ENCODE measurements at regions of chr5 and their contacts with region 1.

Region 1: GRCh38 chr5:56638061-56638621 is 177.2 kb upstream of the MAP3K1 start:
- DNase-seq: peak; percentile 64 to 70
- H3K4me3 ChIP-seq: no peak overlapping the region
- H3K27ac ChIP-seq: no peak overlapping the region
- H3K4me1 ChIP-seq: peaks cover 40% of the 10 kb centered on the region
- H3K27me3 ChIP-seq: no peaks in the 10 kb centered on the region
- CTCF ChIP-seq: no peak

Region 2: GRCh38 chr5:56440871-56441740 is 197.0 kb before region 1 on chr5:
- CTCF ChIA-PET with region 1: no interaction called
- POLR2A ChIA-PET with region 1: no interaction called
- intact Hi-C with region 1: loop called (anchors 10 kb)
- DNase-seq: peak; percentile 29 to 86
- H3K4me3 ChIP-seq: no peak overlapping the region
- H3K27ac ChIP-seq: peak overlapping the region; percentile 75
- H3K4me1 ChIP-seq: peaks cover 27% of the 10 kb centered on the region
- H3K27me3 ChIP-seq: no peaks in the 10 kb centered on the region
- CTCF ChIP-seq: no peak

Region 3: GRCh38 chr5:56543441-56544390 is 94.4 kb before region 1 on chr5:
- CTCF ChIA-PET with region 1: no interaction called
- POLR2A ChIA-PET with region 1: interaction called, 7 read pairs
- intact Hi-C with region 1: loop called (anchors 5 kb)
- DNase-seq: peak; percentile 62 to 97
- H3K4me3 ChIP-seq: no peak overlapping the region
- H3K27ac ChIP-seq: peak overlapping the region; percentile 96
- H3K4me1 ChIP-seq: peaks cover 39% of the 10 kb centered on the region
- H3K27me3 ChIP-seq: no peaks in the 10 kb centered on the region
- CTCF ChIP-seq: no peak

Region 4: GRCh38 chr5:56710826-56711590 is 72.9 kb after region 1 on chr5:
- CTCF ChIA-PET with region 1: no interaction called
- POLR2A ChIA-PET with region 1: no interaction called
- intact Hi-C with region 1: loop called (anchors 5 kb)
- DNase-seq: peak in 1 of 2 experiments; percentile 19
- H3K4me3 ChIP-seq: no peak overlapping the region
- H3K27ac ChIP-seq: no peak overlapping the region
- H3K4me1 ChIP-seq: no peaks in the 10 kb centered on the region
- H3K27me3 ChIP-seq: no peaks in the 10 kb centered on the region
- CTCF ChIP-seq: no peak

Region 5: GRCh38 chr5:56838409-56839039 is 200.4 kb after region 1 on chr5:
- CTCF ChIA-PET with region 1: no interaction called
- POLR2A ChIA-PET with region 1: interaction called, 3 read pairs
- intact Hi-C with region 1: loop called (anchors 5 kb)
- DNase-seq: peak in 1 of 2 experiments; percentile 58
- H3K4me3 ChIP-seq: no peak overlapping the region; the same call in 1 of the 2 replicates
- H3K27ac ChIP-seq: peak overlapping the region; percentile 32
- H3K4me1 ChIP-seq: peaks cover 21% of the 10 kb centered on the region
- H3K27me3 ChIP-seq: no peaks in the 10 kb centered on the region
- CTCF ChIP-seq: peak; percentile 75